AG04450 (cell line): ENCODE measurements at regions of chr13 and their contacts with region 1.

Region 1: GRCh38 chr13:44969551-44970484 is 19.5 kb downstream of the NUFIP1 start:
- DNase-seq: peak; percentile 34
- H3K4me3 ChIP-seq: no peak overlapping the region
- H3K27ac ChIP-seq: no peak overlapping the region
- H3K27me3 ChIP-seq: no peaks in the 10 kb centered on the region
- CTCF ChIP-seq: peak; percentile 73

Region 2: GRCh38 chr13:44917589-44918325 is 52.1 kb before region 1 on chr13:
- CTCF ChIA-PET with region 1: interaction called, 13 read pairs
- POLR2A ChIA-PET with region 1: no interaction called
- DNase-seq: peak; percentile 94
- H3K4me3 ChIP-seq: peak overlapping the region; percentile 66
- H3K27ac ChIP-seq: peak overlapping the region; percentile 99
- H3K27me3 ChIP-seq: no peaks in the 10 kb centered on the region
- CTCF ChIP-seq: peak; percentile 62